ENCODE measurements at regions of chr14 and their contacts with region 1.

Region 1: DNA sequence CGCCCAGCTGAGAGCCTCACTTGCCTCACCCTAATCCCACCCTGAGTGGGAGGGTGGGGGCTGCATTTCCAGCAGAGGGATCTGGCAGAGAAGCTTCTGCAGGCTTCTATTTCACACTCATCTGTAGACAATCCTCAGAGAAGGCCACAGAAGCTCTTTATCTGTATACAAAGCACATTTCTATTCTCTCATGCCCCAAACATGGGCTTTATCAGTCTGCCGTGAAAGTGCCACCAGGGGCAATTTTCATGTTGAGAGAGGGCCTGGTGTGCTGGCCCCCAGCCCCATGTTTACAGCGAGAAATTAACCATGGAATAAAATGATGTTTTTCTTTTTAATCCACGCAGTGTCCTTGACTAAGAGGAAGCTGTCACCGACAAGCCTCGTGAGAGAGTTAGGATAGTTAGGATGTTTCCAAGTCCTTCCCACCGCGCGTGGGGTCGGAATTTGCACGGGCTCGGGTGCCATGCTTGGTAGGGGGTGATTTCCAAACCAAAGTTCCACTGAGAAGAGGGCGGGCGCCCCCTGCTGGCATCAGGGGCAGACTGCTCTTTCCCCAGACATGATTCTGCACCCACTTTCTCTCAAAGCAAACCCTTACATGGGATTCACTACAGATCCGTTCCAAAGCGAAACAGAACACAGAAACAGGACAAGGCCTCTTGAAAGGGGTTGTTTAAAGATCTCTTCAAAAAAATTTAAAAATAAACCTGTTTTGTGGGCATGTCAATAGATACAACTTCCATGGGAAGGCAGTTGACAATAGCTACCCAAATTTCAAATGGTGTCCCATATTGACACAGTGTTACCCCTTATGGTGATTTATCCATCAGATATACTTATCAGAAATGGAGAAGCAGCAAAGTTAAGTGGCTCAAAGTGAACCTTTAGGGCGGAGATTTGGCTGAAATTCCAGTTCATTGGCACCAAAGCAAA is 19.4 kb downstream of the BDKRB1 start:
- DNase-seq: peak; percentile 24
- H3K4me3 Mint-ChIP-seq: no peak overlapping the region
- H3K27ac Mint-ChIP-seq: no peak overlapping the region
- H3K4me1 Mint-ChIP-seq: no peaks in the 10 kb centered on the region
- H3K27me3 Mint-ChIP-seq: peaks cover 3% of the 10 kb centered on the region

Region 2: DNA sequence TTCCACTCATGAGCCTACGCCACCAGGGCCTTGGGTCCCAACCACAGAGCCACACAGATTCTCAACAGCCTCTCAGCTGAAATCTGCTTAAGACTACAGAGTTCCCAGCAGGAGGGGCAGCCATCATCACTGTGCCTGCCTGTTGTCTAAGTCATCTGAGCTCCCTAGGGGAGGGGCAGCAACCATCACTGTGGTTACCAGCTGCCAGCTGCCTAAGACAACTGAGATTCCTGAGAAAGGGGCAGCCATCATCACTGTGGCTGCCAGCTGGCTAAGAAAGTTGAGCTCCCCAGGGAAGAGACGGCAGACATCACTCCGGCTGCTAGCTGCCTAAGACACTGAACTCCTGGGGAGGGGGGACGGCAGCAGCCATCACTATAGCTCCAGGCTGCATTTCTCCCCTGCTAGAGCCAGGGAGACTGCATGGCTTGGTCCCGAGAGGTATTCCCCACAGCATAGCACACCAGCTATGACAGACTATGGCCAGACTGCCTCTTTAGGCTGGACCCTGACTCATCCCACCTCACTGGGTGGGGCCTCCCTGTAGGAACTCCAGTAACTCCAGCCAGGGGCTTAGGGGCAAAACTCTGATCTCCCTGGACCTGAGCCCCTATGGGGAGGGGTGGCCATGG is 273.5 kb before region 1 on chr14:
- intact Hi-C with region 1: loop called (anchors 5 kb)
- DNase-seq: no peak
- H3K4me3 Mint-ChIP-seq: no peak overlapping the region
- H3K27ac Mint-ChIP-seq: no peak overlapping the region
- H3K4me1 Mint-ChIP-seq: no peaks in the 10 kb centered on the region
- H3K27me3 Mint-ChIP-seq: peaks cover 14% of the 10 kb centered on the region

Region 3: DNA sequence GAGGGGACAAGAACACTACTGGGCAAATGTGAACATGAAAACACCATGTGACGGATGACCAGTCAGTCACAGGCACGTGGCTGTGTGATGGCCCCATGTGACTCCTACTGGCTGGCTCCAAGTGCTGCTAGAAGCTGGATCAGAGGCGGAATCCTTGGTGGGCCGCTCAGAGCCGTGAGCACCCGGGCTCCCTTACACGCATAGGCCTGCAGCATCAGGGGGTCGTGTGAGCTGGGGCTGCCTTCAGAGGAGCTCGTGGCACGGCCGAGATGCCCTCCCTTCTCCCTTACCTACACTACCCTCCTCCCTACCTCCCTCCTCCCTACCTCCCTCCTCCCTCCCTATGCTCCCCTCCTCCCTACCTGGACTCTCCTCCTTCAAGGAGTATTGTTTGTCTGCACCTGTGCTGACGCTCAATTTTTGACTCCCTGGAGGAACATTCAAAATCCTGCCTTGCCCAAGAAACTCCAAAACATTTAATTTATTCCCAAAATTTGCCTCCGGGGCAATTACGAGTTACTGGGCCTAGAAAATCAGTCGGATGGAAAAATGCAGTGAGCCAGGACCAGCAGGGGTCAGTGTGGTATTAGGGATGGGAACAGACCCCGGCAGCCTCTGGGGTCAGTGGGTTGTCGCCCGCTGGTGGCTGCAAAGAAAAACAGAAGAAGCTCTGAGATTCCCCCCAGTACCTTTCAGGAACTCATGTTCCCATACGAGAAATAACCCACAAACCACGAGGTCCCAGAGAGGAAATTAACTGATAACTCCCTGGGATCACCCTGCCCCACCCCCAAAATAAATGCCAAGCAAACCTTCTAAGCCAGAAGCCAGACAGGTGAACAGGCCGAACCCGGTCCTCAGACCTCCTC is 175.1 kb before region 1 on chr14:
- intact Hi-C with region 1: loop called (anchors 1 kb)
- DNase-seq: peak; percentile 4
- H3K4me3 Mint-ChIP-seq: no peak overlapping the region
- H3K27ac Mint-ChIP-seq: no peak overlapping the region
- H3K4me1 Mint-ChIP-seq: no peaks in the 10 kb centered on the region
- H3K27me3 Mint-ChIP-seq: no peaks in the 10 kb centered on the region

Region 4: DNA sequence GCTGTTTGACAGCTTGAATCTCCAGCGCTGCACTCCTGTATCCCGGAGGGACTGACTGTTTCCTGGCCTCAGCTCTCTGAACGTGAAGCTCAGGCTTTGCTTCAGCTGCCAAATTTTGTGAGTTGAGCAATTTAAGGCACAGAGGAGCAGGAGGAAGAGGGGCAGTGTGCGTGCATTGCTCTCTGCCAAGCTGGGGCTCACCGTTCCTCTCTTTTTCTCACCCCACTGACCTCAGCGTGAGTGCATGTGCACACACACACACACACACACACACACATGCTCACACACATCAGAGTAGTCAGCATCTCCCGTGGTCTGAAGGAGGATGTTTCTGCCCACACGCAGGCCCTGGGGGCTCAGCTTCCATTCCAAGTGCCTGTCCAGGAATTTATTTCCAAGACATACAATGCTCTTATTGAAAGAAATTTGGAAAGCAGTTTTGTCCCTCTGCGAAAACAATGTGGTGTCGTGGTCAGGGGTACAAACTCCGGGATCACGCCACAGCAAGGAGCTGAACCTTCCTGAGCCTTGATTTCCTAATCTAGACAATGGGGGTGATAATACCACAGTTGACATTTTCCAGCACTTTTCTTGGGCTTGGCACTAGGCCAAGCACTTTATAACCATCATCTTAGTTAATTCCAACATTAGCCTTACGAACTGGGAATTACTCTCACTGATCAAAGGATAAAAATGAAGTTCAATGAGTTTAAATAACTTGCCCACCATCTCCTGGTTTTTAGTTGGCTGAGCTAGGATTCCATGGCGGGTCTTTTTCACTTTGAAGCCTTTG is 98.4 kb before region 1 on chr14:
- intact Hi-C with region 1: no loop called
- DNase-seq: no peak
- H3K4me3 Mint-ChIP-seq: no peak overlapping the region
- H3K27ac Mint-ChIP-seq: no peak overlapping the region
- H3K4me1 Mint-ChIP-seq: no peaks in the 10 kb centered on the region
- H3K27me3 Mint-ChIP-seq: no peaks in the 10 kb centered on the region

Measured in activated T-helper 1 cell treated with anti-CD3 and anti-CD28 coated beads, Interleukin-12 subunit alpha, Interleukin-12 subunit beta, Interleukin-2, Interleukin-4 antibody, amounts not matched to agents 30 ng/mL and 10 ng/mL and 1 ng/mL, durations not matched to agents 14 hours and 24 hours and 36 hours (primary cell).